ENCODE measurements at regions of chr12 and their contacts with region 1.

Region 1: GRCh38 chr12:108562348-108563135 is at the start of gene ISCU:
- DNase-seq: peak; percentile 93 to 99
- H3K4me3 ChIP-seq: peak within 1 kb of the TSS; percentile 82 to 93
- H3K27ac ChIP-seq: peak within 1 kb of the TSS; percentile 92 to 94
- H3K4me1 ChIP-seq: peaks cover 0 to 55% (median 41%) of the 10 kb centered on the region in 4 donors
- H3K27me3 ChIP-seq: no peaks in the 10 kb centered on the region
- CTCF ChIP-seq: no peak

Region 2: DNA sequence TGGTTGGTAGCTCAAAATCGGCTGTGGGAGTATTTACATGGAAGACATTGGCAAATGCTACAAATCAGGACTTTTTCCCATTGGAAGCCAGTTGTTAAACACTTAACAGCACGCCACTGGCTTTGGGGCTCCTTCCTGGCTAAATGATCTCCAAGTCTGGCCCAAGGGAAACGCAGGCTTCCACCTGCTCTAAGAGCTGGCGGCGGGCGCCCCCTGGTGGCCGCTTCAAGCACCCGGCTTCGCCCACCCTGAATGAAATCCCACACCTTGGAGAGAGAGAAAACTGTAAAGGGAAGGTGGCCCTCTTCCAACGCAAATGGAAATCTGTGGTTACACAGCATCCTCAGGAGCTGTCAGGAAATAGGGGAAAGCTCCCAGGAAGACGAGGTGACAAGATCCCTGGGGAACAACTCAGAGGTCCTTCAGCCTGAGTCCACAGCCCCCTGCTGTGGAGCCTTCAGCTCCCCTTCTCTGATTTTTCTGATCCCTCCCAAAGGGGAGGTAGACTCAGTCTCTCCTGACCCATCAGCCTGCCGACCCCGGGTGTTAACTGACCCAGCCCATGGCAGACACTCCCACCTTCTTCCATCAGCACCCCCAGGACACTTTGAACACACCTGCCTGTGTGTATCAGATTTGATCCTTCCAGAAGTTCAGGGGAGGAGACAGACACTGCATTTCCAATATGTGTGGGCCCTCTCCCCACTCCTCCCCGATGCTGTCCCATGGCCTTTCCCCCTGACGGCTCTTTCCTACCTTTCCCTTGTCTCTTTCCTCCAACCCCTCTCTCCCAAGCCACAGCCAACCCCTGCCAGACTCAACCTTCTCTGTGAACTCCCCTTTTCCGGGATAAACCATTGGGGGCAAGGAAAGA is 55.8 kb after region 1 on chr12:
- intact Hi-C with region 1: loop called (anchors 5 kb)
- DNase-seq: peak; percentile 75 to 82
- H3K4me3 ChIP-seq: no peak overlapping the region
- H3K27ac ChIP-seq: no peak overlapping the region
- H3K4me1 ChIP-seq: peaks cover 0 to 7% (median 3%) of the 10 kb centered on the region in 4 donors
- H3K27me3 ChIP-seq: no peaks in the 10 kb centered on the region
- CTCF ChIP-seq: peak; percentile 90 to 96

Region 3: GRCh38 chr12:108803428-108804105 is 241.0 kb after region 1 on chr12:
- intact Hi-C with region 1: loop called (anchors 10 kb)
- DNase-seq: peak; percentile 90 to 91
- H3K4me3 ChIP-seq: no peak overlapping the region
- H3K27ac ChIP-seq: peak overlapping the region; percentile 80
- H3K4me1 ChIP-seq: peaks cover 0 to 76% (median 34%) of the 10 kb centered on the region in 4 donors
- H3K27me3 ChIP-seq: no peaks in the 10 kb centered on the region
- CTCF ChIP-seq: peak; percentile 95 to 97

Region 4: GRCh38 chr12:108856428-108857157 is 294.1 kb after region 1 on chr12:
- intact Hi-C with region 1: loop called (anchors 5 kb)
- DNase-seq: peak; percentile 77 to 93
- H3K4me3 ChIP-seq: peak overlapping the region; percentile 69 to 86
- H3K27ac ChIP-seq: peak overlapping the region; percentile 89 to 98
- H3K4me1 ChIP-seq: peaks cover 0 to 65% (median 44%) of the 10 kb centered on the region in 4 donors
- H3K27me3 ChIP-seq: no peaks in the 10 kb centered on the region
- CTCF ChIP-seq: no peak

Region 5: GRCh38 chr12:108950991-108951739 is 388.6 kb after region 1 on chr12:
- intact Hi-C with region 1: loop called (anchors 10 kb)
- DNase-seq: peak; percentile 69 to 76
- H3K4me3 ChIP-seq: no peak overlapping the region
- H3K27ac ChIP-seq: no peak overlapping the region
- H3K4me1 ChIP-seq: peaks cover 0 to 7% (median 0%) of the 10 kb centered on the region in 4 donors
- H3K27me3 ChIP-seq: peaks cover 0 to 6% of the 10 kb centered on the region in 2 donors
- CTCF ChIP-seq: peak; percentile 87 to 89

Region 6: DNA sequence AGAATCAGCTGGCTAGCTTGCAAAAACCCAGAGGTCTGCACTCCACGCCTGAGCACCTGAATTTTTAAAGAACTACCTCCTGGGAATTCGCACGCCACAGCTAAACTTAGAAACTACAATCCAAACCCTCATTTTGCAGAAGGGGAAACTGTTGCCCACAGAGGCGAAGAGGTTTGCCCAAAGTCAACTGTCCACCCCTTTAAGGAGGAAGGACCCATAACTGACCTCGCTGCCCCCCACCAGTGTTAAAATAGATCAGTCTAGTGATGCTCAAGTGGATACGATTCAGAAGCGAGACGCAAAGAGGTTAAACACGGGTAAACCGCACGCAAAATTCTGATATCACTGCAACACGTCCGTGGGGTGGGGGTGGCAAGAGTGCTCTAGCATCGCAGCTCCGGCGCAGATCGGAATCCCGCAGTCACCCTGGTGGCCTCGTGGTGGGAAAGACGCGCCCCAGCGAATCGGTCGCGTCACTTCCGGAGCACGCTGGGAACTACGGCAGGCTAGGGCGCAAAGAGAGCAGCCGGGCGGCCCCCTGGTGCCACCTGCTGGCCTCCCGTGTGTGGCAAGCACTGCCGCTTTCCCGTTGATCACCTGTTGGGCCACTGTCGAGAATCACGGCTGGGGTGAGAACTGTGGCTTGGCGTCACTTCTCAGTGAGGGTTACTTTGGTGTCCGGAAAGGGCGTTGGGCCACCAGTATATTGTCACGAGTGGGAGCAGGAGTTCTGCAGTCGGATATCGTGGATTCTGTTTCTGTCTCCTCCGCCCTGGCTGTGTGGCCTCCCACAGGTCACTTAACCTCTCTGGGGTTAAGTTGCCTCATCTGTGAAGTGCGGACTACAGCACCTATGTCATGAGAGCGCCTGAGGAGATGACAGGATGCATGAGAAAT is 530.7 kb after region 1 on chr12 and contains the start of gene ALKBH2:
- intact Hi-C with region 1: loop called (anchors 5 kb)
- DNase-seq: peak; percentile 91 to 96
- H3K4me3 ChIP-seq: peak within 1 kb of the TSS; percentile 57 to 61
- H3K27ac ChIP-seq: peak within 1 kb of the TSS; percentile 65 to 72
- H3K4me1 ChIP-seq: peaks cover 0 to 31% (median 25%) of the 10 kb centered on the region in 4 donors
- H3K27me3 ChIP-seq: peaks cover 0 to 2% of the 10 kb centered on the region in 2 donors
- CTCF ChIP-seq: peak; percentile 97 to 100